ENCODE measurements at regions of chr7 and their contacts with region 1.

Region 1: DNA sequence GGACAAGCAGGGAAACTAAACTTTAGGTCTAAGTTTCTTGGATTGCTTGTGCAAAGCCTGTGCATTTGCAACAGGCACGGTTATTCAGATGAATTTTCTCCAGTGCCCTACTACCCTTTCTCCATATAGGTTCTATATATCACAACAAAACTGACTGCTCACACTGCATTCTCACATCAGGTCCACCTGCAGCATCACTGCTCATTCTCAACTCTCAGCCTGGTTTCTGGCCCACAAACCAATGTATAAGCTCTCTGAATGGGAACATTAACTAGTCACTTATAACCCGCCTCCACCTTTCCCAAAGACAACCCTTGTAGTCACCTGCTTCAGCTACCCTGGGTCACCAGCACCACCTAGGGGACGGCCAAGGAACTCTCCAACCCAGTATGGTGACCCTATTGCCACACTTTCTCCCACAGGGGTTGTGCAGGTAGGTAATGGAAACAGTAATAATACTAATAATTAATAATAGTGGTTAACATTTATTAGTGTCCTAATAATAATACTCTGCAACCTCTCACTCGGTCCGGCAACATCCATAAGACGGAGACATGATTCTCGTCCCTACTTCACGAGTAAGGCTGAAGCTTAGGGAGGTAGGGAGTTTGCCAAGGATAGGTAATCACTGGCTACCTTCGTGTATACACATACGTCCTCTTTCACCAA is 97.3 kb downstream of the CLEC2L start:
- DNase-seq: peak in 8 of 9 experiments; percentile 24 to 69 (median 52)
- ATAC-seq: peak; percentile 87
- H3K4me3 ChIP-seq: no peak overlapping the region
- H3K4me3 Mint-ChIP-seq: no peak overlapping the region
- H3K27ac ChIP-seq: no peak overlapping the region
- H3K27ac Mint-ChIP-seq: peak overlapping the region; percentile 3
- H3K4me1 ChIP-seq: peaks cover 9% of the 10 kb centered on the region
- H3K4me1 Mint-ChIP-seq: peaks cover 27% of the 10 kb centered on the region
- H3K27me3 ChIP-seq: no peaks in the 10 kb centered on the region
- H3K27me3 Mint-ChIP-seq: no peaks in the 10 kb centered on the region
- CTCF ChIP-seq: peak; percentile 65

Region 2: GRCh38 chr7:139494835-139495579 is 125.8 kb before region 1 on chr7:
- CTCF ChIA-PET with region 1: interaction called, 3 read pairs
- POLR2A ChIA-PET with region 1: no interaction called
- intact Hi-C with region 1: loop called in 1 of 2 experiments (anchors 2 kb)
- DNase-seq: no peak
- ATAC-seq: no peak
- H3K4me3 ChIP-seq: no peak overlapping the region
- H3K4me3 Mint-ChIP-seq: no peak overlapping the region
- H3K27ac ChIP-seq: no peak overlapping the region
- H3K27ac Mint-ChIP-seq: no peak overlapping the region
- H3K4me1 ChIP-seq: no peaks in the 10 kb centered on the region
- H3K4me1 Mint-ChIP-seq: peaks cover 2% of the 10 kb centered on the region
- H3K27me3 ChIP-seq: no peaks in the 10 kb centered on the region
- H3K27me3 Mint-ChIP-seq: peaks cover 3% of the 10 kb centered on the region
- CTCF ChIP-seq: no peak

Region 3: GRCh38 chr7:139602143-139602722 is 18.6 kb before region 1 on chr7:
- CTCF ChIA-PET with region 1: interaction called, 28 read pairs
- POLR2A ChIA-PET with region 1: no interaction called
- intact Hi-C with region 1: no loop called
- DNase-seq: peak in 2 of 9 experiments; percentile 33 to 49
- ATAC-seq: peak; percentile 61
- H3K4me3 ChIP-seq: no peak overlapping the region
- H3K4me3 Mint-ChIP-seq: no peak overlapping the region
- H3K27ac ChIP-seq: no peak overlapping the region
- H3K27ac Mint-ChIP-seq: no peak overlapping the region
- H3K4me1 ChIP-seq: no peaks in the 10 kb centered on the region
- H3K4me1 Mint-ChIP-seq: no peaks in the 10 kb centered on the region
- H3K27me3 ChIP-seq: no peaks in the 10 kb centered on the region
- H3K27me3 Mint-ChIP-seq: no peaks in the 10 kb centered on the region
- CTCF ChIP-seq: peak; percentile 57

Region 4: DNA sequence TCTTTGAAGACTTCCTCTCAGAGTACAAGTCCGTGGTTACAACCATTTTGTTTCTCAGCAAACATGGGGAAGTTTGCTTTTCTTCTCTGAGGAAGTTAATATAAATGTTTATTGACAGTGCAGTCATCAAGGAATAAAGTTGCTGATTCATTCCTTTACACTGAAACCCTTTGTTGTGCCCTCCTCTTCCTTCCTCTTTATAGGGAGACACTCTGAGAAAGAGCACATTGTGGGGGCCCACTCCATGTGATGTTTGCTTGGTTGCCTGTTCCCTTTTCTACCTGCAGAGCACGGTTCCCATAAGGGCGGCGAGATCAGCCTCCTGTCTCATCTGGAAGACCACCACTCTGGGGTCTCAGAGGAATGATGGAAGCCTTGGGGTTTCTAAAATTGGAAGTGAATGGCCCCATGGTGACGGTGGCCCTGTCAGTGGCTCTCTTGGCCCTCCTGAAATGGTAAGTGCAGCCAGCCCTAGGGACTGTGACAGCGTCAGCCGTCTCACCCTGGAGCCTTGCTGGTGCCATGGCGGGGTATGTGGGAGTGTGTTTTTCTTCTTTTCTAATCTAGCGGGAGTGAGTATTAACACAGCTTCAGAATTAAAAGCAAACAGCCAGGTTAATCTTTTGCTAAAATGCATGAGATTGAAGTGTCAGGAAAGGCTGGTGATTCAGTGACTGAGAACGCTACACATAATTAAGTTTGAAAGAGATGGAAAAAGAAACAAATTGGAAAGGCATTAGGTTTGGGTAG is 208.4 kb after region 1 on chr7 and contains the start of gene TBXAS1:
- CTCF ChIA-PET with region 1: interaction called, 14 read pairs
- POLR2A ChIA-PET with region 1: no interaction called
- intact Hi-C with region 1: loop called in 1 of 2 experiments (anchors 1 kb)
- DNase-seq: peak in 1 of 9 experiments; percentile 20
- ATAC-seq: no peak
- H3K4me3 ChIP-seq: no peak within 1 kb of the TSS
- H3K4me3 Mint-ChIP-seq: peak within 1 kb of the TSS; percentile 59
- H3K27ac ChIP-seq: peak within 1 kb of the TSS in 1 of 2 experiments; percentile 48
- H3K27ac Mint-ChIP-seq: peak within 1 kb of the TSS; percentile 76
- H3K4me1 ChIP-seq: no peaks in the 10 kb centered on the region
- H3K4me1 Mint-ChIP-seq: peaks cover 20% of the 10 kb centered on the region
- H3K27me3 ChIP-seq: no peaks in the 10 kb centered on the region
- H3K27me3 Mint-ChIP-seq: peaks cover 3% of the 10 kb centered on the region
- CTCF ChIP-seq: no peak
- total RNA-seq, gene TBXAS1: 0.43 to 0.97 TPM

Region 5: GRCh38 chr7:140003913-140004382 is 383.1 kb after region 1 on chr7:
- CTCF ChIA-PET with region 1: interaction called, 83 read pairs
- POLR2A ChIA-PET with region 1: no interaction called
- intact Hi-C with region 1: loop called (anchors 1 kb)
- DNase-seq: peak in 4 of 9 experiments; percentile 4 to 50 (median 31)
- ATAC-seq: no peak
- H3K4me3 ChIP-seq: no peak overlapping the region
- H3K4me3 Mint-ChIP-seq: no peak overlapping the region
- H3K27ac ChIP-seq: no peak overlapping the region
- H3K27ac Mint-ChIP-seq: no peak overlapping the region
- H3K4me1 ChIP-seq: no peaks in the 10 kb centered on the region
- H3K4me1 Mint-ChIP-seq: no peaks in the 10 kb centered on the region
- H3K27me3 ChIP-seq: no peaks in the 10 kb centered on the region
- H3K27me3 Mint-ChIP-seq: no peaks in the 10 kb centered on the region
- CTCF ChIP-seq: peak; percentile 49

Region 6: DNA sequence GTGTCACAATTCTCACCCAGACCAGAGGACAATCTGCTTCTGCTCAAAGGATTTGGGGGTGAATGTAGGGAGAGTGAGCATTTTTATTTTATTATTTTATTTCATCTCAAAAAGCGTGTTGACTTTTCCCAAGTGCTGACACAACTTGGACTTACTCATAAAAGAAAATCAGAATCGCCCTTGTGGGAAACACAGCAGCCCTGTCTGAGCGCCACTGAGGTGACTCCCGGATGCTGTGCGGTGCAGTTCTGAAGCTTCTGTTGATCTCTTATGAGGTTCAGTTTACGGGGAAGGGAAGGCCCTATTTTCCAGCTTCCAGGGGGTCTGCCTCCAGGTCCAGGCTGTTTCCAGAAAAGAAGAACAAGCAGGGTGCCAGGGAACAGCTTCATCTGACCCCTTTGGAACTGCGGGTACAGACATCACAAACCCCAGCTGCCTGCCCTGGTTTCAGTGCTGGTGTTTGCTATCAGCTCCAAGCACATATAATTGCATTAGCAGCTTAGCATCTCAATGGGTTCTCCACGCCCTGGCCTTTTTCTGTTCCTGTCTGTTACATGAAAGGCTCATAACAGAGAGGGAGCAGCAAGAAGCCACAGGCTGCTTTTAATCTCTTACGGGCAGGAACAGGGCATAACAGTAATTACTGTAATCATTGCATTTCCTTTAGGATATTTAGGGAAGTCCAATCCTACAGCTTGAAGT is 389.5 kb after region 1 on chr7:
- CTCF ChIA-PET with region 1: interaction called, 83 read pairs
- POLR2A ChIA-PET with region 1: no interaction called
- intact Hi-C with region 1: no loop called
- DNase-seq: no peak
- ATAC-seq: no peak
- H3K4me3 ChIP-seq: no peak overlapping the region
- H3K4me3 Mint-ChIP-seq: no peak overlapping the region
- H3K27ac ChIP-seq: no peak overlapping the region
- H3K27ac Mint-ChIP-seq: no peak overlapping the region
- H3K4me1 ChIP-seq: no peaks in the 10 kb centered on the region
- H3K4me1 Mint-ChIP-seq: no peaks in the 10 kb centered on the region
- H3K27me3 ChIP-seq: no peaks in the 10 kb centered on the region
- H3K27me3 Mint-ChIP-seq: no peaks in the 10 kb centered on the region
- CTCF ChIP-seq: no peak

Measured in CD8-positive, alpha-beta T cell (primary cell).